ENCODE measurements at regions of chrX and their contacts with region 1.

Region 1: DNA sequence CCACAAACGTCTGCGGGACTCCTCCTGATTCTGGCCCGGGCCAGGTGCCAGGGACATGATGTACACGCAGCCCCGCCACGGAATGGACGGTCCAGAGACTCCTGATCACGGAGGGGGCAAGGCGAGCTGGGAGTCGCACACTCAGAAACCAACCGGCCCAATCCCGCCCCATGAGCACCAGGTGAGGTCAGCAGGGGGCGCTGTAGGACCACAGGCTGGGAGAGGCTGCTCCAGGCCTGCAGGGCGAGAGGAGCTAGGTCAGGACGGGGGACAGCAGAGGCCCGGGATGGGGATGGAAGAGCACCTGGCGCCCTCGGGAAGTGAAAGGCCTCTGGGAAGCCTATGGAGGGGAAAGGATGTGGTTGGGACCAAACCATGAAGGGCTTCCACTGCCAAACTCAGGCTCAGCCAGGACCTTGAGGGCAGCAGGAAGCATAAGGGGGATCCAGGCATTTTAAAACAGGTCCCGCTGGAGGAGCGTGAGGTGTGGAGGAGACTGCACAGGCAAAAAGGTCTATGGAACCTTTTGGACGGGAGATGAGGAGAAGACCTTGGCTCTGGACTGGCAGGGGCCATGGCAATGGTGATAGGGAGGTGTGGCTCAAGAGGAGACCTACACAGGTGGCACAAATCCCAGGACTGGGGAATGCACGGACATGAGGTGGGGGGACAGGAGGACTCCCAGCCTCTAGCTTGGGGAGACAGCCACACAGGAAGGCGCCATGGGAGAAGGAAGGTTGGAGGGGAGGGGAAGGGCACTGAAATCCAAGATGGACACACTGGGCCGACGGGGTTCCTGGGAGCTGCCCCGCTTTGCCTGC is 79.2 kb downstream of the MTMR1 start:
- DNase-seq: peak; percentile 77
- H3K4me3 Mint-ChIP-seq: no peak overlapping the region
- H3K27ac Mint-ChIP-seq: no peak overlapping the region
- H3K4me1 Mint-ChIP-seq: peaks cover 3% of the 10 kb centered on the region
- H3K27me3 Mint-ChIP-seq: no peaks in the 10 kb centered on the region

Region 2: DNA sequence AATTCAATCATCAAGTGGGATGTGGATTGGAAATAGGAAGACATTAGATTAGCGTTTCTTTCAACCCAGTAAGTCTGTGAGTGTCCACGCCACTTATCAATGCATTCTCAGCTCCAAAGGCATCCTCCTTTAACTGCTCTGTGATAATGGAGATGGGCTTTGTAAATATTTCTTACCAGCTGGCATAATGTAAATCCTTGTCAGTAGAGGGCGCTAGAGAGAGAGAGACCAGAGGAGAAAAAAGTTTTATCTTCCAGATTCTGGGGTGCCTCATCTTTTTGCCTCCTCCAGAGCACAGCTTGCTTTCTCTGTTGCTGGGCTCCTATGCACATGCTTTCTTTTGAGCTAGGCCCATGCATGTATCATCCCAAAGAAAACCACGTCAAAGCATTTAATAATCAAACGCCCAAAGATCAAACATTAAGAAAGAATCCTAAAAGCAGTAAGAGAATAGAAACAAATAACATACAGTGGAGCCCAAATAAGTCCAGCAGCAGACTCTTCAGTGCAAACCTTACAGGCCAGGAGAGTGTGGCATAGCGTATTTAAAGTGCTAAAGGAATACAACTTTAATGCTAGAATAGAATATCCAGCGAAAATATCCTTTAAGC is 88.7 kb before region 1 on chrX:
- CTCF ChIA-PET with region 1: no interaction called
- POLR2A ChIA-PET with region 1: no interaction called
- DNase-seq: peak; percentile 17
- H3K4me3 Mint-ChIP-seq: no peak overlapping the region
- H3K27ac Mint-ChIP-seq: no peak overlapping the region
- H3K4me1 Mint-ChIP-seq: peaks cover 4% of the 10 kb centered on the region
- H3K27me3 Mint-ChIP-seq: no peaks in the 10 kb centered on the region

Region 3: DNA sequence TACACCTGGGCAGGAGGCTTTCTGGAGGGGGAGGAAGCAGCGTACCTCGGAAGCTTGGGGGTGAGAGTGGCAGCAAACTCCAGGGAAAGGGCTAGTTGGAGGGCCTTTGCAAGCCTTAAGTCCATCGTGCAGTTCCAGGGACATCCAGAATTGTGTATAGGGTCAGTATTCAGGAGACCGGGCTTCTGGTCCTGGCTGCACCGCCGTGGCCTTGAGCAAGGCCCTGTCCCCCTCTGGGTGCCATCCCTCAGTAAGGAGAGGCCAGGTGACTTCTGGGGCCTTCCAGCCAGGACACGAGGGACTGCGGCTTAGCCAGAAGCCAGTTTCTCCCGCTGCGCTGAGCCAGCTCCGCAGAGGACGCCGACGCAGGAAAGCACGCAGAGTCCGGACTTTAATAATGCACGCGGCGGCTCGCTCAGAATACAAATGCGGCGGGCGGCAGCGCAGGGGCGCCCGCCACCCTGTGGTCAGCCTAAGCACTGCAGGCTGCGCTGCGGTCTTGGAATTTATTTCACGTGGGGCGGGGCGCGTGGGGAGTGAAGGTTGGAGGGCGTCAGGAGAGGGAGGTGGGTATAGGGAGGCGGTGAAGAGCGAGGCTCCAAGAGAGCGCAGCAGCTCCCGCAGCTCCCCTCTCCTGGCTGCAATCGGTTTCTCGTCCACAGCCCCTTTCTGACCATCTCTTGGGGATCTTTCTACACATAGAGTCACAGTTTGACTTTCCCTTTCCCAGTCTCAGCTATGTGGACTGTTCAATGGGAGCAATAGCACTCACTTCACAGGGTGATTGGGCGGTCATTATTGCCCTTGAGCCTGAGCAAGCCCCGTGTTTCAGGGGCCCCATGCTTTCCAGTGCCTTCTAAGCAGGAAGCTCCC is 310.0 kb after region 1 on chrX:
- CTCF ChIA-PET with region 1: interaction called, 46 read pairs
- POLR2A ChIA-PET with region 1: no interaction called
- DNase-seq: peak; percentile 57
- H3K4me3 Mint-ChIP-seq: no peak overlapping the region
- H3K27ac Mint-ChIP-seq: no peak overlapping the region
- H3K4me1 Mint-ChIP-seq: peaks cover 2% of the 10 kb centered on the region
- H3K27me3 Mint-ChIP-seq: peaks cover 9% of the 10 kb centered on the region